AG04449 (cell line): ENCODE measurements at regions of chr7 and their contacts with region 1.

Region 1: GRCh38 chr7:131625817-131626372 is 69.5 kb upstream of the PODXL start:
- DNase-seq: peak; percentile 38
- H3K4me3 ChIP-seq: no peak overlapping the region
- CTCF ChIP-seq: no peak

Region 2: DNA sequence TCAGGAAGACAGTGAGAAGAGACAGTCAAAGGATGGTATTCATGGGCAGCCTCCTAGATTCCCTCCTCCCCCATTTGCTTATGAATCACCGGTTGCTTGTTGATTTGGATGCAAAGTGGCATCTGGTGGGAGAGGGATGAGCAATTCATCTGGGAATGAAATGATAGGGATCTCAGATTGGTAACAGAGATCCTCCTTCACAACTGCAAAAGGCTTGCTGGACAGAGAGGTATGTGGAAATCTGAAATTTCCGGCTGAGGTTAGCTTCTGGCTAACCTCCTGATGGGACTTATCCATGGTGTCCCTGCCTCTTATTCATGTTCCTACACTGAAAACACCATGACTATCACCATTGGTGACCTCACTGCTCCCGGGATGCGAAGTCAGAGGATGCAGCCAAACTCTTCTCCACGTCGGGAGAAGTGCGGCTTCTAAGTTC is 21.0 kb before region 1 on chr7:
- CTCF ChIA-PET with region 1: interaction called, 15 read pairs
- POLR2A ChIA-PET with region 1: interaction called, 3 read pairs
- DNase-seq: peak; percentile 77
- H3K4me3 ChIP-seq: no peak overlapping the region
- CTCF ChIP-seq: no peak